Heart right ventricle (tissue), 16 donors: ENCODE measurements at regions of chr2 and their contacts with region 1.

Region 1: GRCh38 chr2:207632575-207633493 is 7.6 kb upstream of the METTL21A start:
- DNase-seq: no peak
- ATAC-seq: peak in 1 of 8 donors; percentile 50
- H3K4me3 ChIP-seq: no peak overlapping the region
- H3K27ac ChIP-seq: no peak overlapping the region
- H3K4me1 ChIP-seq: peaks cover 0 to 16% (median 0%) of the 10 kb centered on the region in 9 donors
- H3K27me3 ChIP-seq: no peaks in the 10 kb centered on the region
- CTCF ChIP-seq: no peak

Region 2: GRCh38 chr2:206112846-206113547 is 1519.8 kb before region 1 on chr2:
- intact Hi-C with region 1: no loop called
- DNase-seq: no peak
- ATAC-seq: peak in 1 of 8 donors; percentile 17
- H3K4me3 ChIP-seq: no peak overlapping the region
- H3K27ac ChIP-seq: no peak overlapping the region
- H3K4me1 ChIP-seq: no peaks in the 10 kb centered on the region
- H3K27me3 ChIP-seq: no peaks in the 10 kb centered on the region
- CTCF ChIP-seq: no peak

Region 3: DNA sequence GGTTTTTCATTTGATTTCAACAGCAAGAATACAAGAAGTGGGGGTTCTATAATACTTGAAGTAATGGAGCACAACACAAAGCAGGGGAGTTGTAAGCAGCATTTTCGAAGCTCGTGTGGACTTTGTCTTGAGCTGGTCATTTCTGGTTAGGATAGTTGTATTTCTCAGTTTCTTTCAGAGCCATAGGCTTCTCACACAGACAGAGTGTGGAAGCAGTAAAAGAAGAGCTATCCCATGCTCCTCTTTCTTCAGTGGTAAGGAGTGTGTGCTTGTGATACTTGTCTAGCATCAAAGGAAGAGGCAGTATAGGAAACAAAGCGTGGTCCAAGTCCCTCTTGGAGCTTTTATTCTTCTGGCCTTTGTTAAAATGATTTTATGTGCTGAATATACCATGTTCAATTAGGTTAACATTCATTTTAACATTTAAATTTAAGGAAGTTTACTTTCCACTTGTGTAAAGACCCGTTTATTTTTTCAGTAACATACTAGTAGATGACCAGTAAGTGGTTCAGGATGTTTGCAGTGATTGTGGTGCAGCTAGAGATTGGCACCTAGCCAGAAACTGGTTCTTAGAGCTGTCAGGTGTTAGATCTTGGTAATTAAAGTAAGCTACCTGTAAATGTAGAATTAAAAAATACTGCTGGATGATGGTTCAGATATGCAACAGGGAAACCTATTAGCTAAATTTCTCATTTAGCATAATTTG is 93.2 kb after region 1 on chr2:
- intact Hi-C with region 1: loop called in 2 of 10 experiments (anchors 5 to 10 kb)
- DNase-seq: no peak
- ATAC-seq: no peak
- H3K4me3 ChIP-seq: no peak overlapping the region
- H3K27ac ChIP-seq: no peak overlapping the region
- H3K4me1 ChIP-seq: peaks cover 0 to 13% (median 0%) of the 10 kb centered on the region in 9 donors
- H3K27me3 ChIP-seq: no peaks in the 10 kb centered on the region
- CTCF ChIP-seq: no peak

Region 4: GRCh38 chr2:207734264-207734635 is 101.4 kb after region 1 on chr2:
- intact Hi-C with region 1: loop called in 3 of 10 experiments (anchors 2 to 10 kb)
- DNase-seq: no peak
- ATAC-seq: peak in 3 of 8 donors; percentile 52 to 74 (median 74)
- H3K4me3 ChIP-seq: no peak overlapping the region
- H3K27ac ChIP-seq: no peak overlapping the region
- H3K4me1 ChIP-seq: no peaks in the 10 kb centered on the region
- H3K27me3 ChIP-seq: no peaks in the 10 kb centered on the region
- CTCF ChIP-seq: peak in 8 of 9 donors; percentile 10 to 64 (median 42)